K562 (cell line): ENCODE measurements at regions of chr1 and their contacts with region 1.

Region 1: GRCh38 chr1:92599184-92599583 is 112.5 kb upstream of the GFI1 start:
- DNase-seq: peak in 2 of 4 experiments; percentile 12 to 30
- ATAC-seq: no peak
- H3K4me3 ChIP-seq: no peak overlapping the region
- H3K27ac ChIP-seq: no peak overlapping the region
- H3K4me1 ChIP-seq: no peaks in the 10 kb centered on the region
- H3K27me3 ChIP-seq: no peaks in the 10 kb centered on the region
- CTCF ChIP-seq: peak in 1 of 3 experiments; percentile 53; a peak in 2 of 6 replicates
- EP300 ChIP-seq: no peak
- POLR2A ChIP-seq: no peak
- RAD21 ChIP-seq: peak; percentile 77 to 78

Region 2: GRCh38 chr1:92367496-92367895 is 231.7 kb before region 1 on chr1:
- CTCF ChIA-PET with region 1: no interaction called
- POLR2A ChIA-PET with region 1: no interaction called
- in situ Hi-C with region 1: no loop called
- intact Hi-C with region 1: no loop called
- DNase-seq: no peak
- ATAC-seq: no peak
- H3K4me3 ChIP-seq: no peak overlapping the region
- H3K27ac ChIP-seq: no peak overlapping the region
- H3K4me1 ChIP-seq: no peaks in the 10 kb centered on the region; a peak in 1 of 5 replicates
- H3K27me3 ChIP-seq: no peaks in the 10 kb centered on the region
- CTCF ChIP-seq: no peak
- EP300 ChIP-seq: no peak
- POLR2A ChIP-seq: no peak
- RAD21 ChIP-seq: no peak

Region 3: DNA sequence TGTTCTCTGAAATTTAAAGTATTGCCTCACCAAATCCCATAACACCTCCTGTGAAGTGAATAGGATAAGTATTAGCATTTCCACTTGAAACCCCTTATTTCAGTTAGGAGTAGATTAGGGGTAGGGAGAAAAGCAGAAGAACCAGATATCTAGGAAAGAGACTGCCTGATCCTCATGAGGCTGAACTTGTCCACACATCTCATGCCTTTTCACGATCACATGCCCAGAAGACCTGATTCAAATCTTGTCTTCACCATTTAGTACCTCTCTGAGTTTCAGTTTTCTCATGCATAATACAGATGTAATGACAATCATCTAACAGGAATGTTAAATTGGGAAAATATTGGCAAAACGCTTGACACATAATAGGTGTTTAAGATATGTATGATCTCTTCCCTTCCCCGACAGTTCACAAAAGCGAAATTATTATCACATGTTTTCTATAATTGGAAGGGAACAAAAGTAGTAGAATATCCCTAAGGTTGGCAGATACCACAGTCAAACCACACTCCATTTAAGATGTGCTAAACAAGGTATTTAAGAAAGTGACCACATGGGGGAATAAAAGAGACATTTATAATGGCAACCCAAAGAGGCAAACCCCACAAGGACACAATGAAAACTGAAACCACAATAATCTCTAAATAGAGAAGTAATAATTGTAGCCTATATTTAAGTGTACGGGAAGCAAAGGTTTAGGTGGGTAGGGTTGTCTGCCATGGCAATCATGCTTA is 137.7 kb before region 1 on chr1:
- CTCF ChIA-PET with region 1: no interaction called
- POLR2A ChIA-PET with region 1: no interaction called
- in situ Hi-C with region 1: no loop called
- intact Hi-C with region 1: loop called (anchors 1 kb)
- DNase-seq: no peak
- ATAC-seq: peak; percentile 61
- H3K4me3 ChIP-seq: no peak overlapping the region
- H3K27ac ChIP-seq: no peak overlapping the region
- H3K4me1 ChIP-seq: peaks cover 0 to 22% of the 10 kb centered on the region in 2 experiments; a peak in 3 of 5 replicates
- H3K27me3 ChIP-seq: no peaks in the 10 kb centered on the region
- CTCF ChIP-seq: peak in 1 of 3 experiments; percentile 29; a peak in 1 of 6 replicates
- EP300 ChIP-seq: no peak
- POLR2A ChIP-seq: no peak
- RAD21 ChIP-seq: peak in 1 of 2 experiments; percentile 48; a peak in 3 of 4 replicates

Region 4: GRCh38 chr1:92577261-92577895 is 21.8 kb before region 1 on chr1:
- CTCF ChIA-PET with region 1: no interaction called
- POLR2A ChIA-PET with region 1: no interaction called
- in situ Hi-C with region 1: no loop called
- intact Hi-C with region 1: no loop called
- DNase-seq: no peak
- ATAC-seq: no peak
- H3K4me3 ChIP-seq: no peak overlapping the region
- H3K27ac ChIP-seq: no peak overlapping the region
- H3K4me1 ChIP-seq: no peaks in the 10 kb centered on the region
- H3K27me3 ChIP-seq: no peaks in the 10 kb centered on the region
- CTCF ChIP-seq: no peak
- EP300 ChIP-seq: no peak
- POLR2A ChIP-seq: no peak
- RAD21 ChIP-seq: no peak